Activated CD8-positive, alpha-beta T cell treated with anti-CD3 and anti-CD28 coated beads, Interleukin-2, amount 10 ng/mL, durations not matched to agents 7 days and 5 days (primary cell): ENCODE measurements at regions of chr17 and their contacts with region 1.

Region 1: DNA sequence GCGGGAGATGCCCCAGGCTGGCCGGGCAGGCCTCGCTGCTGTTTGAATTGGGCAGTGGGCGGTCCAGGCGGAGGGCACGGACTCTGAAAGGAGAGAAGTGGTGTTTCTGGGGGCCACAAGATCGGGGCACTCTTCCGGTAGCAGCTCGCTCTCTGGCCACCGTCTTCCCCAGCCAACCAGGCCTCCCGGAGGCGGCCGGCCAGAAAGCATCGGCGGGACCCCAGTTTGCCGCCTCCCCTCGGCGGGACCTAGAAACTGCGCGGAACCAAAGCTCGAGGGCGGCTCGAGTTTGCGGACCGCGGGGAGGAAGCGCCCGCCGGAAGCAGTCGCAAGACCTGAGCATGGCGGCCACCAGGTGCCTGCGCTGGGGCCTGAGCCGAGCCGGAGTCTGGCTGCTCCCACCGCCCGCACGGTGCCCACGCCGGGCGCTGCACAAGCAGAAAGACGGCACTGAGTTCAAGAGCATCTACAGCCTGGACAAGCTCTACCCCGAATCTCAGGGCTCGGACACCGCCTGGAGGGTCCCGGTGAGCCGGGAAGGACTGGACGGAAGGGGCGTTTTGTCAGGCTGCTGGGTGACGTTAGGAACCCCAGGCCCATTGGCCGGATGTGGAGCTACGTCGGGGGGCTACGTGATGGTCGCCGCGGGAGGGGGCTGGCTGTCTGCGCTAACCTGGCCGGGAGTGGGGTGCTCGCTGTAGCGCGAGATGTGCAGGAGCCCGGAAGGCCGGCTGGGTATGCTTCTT is at the start of gene MRPL58:
- DNase-seq: peak; percentile 90
- ATAC-seq: peak; percentile 96
- H3K4me3 Mint-ChIP-seq: peak within 1 kb of the TSS; percentile 95
- H3K27ac Mint-ChIP-seq: peak within 1 kb of the TSS; percentile 93
- H3K4me1 Mint-ChIP-seq: peaks cover 15% of the 10 kb centered on the region
- H3K27me3 Mint-ChIP-seq: no peaks in the 10 kb centered on the region
- total RNA-seq, gene MRPL58: 45.1 to 45.8 TPM

Region 2: GRCh38 chr17:74892974-74893911 is 119.3 kb before region 1 on chr17 and contains the start of gene FADS6:
- CTCF ChIA-PET with region 1: no interaction called
- POLR2A ChIA-PET with region 1: no interaction called
- DNase-seq: no peak
- ATAC-seq: peak; percentile 65
- H3K4me3 Mint-ChIP-seq: no peak within 1 kb of the TSS
- H3K27ac Mint-ChIP-seq: no peak within 1 kb of the TSS
- H3K4me1 Mint-ChIP-seq: peaks cover 3% of the 10 kb centered on the region
- H3K27me3 Mint-ChIP-seq: peaks cover 45% of the 10 kb centered on the region
- total RNA-seq, gene FADS6: not detected

Region 3: DNA sequence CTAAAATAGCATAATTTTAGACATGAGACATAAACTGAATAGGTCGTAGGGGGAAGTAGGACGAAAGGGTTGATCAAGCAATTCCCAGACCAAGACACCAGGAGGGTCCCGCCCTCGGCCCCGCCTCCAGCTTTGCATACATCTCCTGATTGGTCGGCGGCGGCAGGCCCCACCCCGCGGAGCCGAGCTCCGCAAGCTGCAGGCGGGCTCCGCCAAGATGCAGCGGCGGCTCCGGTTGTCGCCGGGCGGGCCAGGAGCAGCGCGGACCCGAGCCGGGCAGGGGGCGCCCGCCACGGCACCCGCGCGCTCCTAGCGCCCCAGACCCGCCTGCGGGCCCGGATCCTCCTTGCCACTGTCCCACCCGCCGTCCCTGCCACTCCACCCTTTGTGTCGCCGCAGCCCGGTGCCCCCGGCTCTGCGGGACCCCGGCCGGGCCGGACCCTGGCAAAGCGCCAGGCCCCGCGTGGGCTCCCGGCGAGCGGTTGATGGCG is 25.1 kb before region 1 on chr17 and contains the start of gene CDR2L:
- CTCF ChIA-PET with region 1: interaction called, 17 read pairs
- POLR2A ChIA-PET with region 1: interaction called, 14 read pairs
- DNase-seq: peak; percentile 92
- ATAC-seq: peak; percentile 98
- H3K4me3 Mint-ChIP-seq: peak within 1 kb of the TSS; percentile 74
- H3K27ac Mint-ChIP-seq: no peak within 1 kb of the TSS
- H3K4me1 Mint-ChIP-seq: peaks cover 15% of the 10 kb centered on the region
- H3K27me3 Mint-ChIP-seq: peaks cover 48% of the 10 kb centered on the region
- total RNA-seq, gene CDR2L: 0.13 to 0.18 TPM

Region 4: DNA sequence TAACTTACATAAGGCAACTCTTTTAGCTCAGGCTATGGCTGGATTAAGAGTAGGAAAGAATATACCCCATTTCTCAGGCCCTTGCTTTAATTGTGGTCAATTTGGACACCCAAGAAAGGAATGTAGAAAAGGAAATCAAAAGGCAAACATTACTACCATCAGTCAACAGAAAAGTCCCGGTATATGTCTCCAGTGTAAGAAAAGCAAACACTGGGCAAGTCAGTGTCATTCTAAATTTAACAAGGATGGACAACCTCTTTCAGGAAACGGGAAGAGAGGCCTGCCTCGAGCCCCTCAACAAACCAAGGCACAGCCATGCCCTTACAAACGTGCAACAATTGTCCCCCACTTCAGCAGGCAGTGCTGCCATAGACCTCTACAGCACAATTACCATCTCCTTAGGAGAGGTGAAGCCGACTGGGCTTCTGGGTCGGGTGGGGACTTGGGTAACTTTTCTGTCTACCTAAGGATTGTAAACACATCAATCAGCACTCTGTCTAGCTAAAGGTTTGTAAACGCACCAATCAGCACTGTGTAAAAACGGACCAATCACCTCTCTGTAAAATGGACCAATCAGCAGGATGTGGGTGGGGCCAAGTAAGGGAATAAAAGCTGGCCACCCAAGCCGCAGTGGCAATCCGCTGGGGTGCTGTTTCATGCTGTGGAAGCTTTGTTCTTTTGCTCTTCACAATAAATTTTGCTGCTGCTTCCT is 12.3 kb after region 1 on chr17:
- CTCF ChIA-PET with region 1: interaction called, 24 read pairs
- POLR2A ChIA-PET with region 1: interaction called, 19 read pairs
- DNase-seq: peak; percentile 58
- ATAC-seq: peak; percentile 53
- H3K4me3 Mint-ChIP-seq: peak overlapping the region; percentile 27
- H3K27ac Mint-ChIP-seq: peak overlapping the region; percentile 44
- H3K4me1 Mint-ChIP-seq: peaks cover 21% of the 10 kb centered on the region
- H3K27me3 Mint-ChIP-seq: peaks cover 8% of the 10 kb centered on the region

Region 5: GRCh38 chr17:75046582-75047289 is 34.2 kb after region 1 on chr17 and contains the starts of genes ATP5PD and KCTD2:
- CTCF ChIA-PET with region 1: interaction called, 13 read pairs
- POLR2A ChIA-PET with region 1: interaction called, 19 read pairs
- DNase-seq: peak; percentile 97
- ATAC-seq: peak; percentile 96
- H3K4me3 Mint-ChIP-seq: peak within 1 kb of the TSS; percentile 98
- H3K27ac Mint-ChIP-seq: peak within 1 kb of the TSS; percentile 91
- H3K4me1 Mint-ChIP-seq: peaks cover 43% of the 10 kb centered on the region
- H3K27me3 Mint-ChIP-seq: no peaks in the 10 kb centered on the region
- total RNA-seq, gene ATP5PD: 232 to 238 TPM
- total RNA-seq, gene KCTD2: 15.6 to 19.4 TPM